Aorta (tissue), 5 donors: ENCODE measurements at regions of chr6 and their contacts with region 1.

Region 1: DNA sequence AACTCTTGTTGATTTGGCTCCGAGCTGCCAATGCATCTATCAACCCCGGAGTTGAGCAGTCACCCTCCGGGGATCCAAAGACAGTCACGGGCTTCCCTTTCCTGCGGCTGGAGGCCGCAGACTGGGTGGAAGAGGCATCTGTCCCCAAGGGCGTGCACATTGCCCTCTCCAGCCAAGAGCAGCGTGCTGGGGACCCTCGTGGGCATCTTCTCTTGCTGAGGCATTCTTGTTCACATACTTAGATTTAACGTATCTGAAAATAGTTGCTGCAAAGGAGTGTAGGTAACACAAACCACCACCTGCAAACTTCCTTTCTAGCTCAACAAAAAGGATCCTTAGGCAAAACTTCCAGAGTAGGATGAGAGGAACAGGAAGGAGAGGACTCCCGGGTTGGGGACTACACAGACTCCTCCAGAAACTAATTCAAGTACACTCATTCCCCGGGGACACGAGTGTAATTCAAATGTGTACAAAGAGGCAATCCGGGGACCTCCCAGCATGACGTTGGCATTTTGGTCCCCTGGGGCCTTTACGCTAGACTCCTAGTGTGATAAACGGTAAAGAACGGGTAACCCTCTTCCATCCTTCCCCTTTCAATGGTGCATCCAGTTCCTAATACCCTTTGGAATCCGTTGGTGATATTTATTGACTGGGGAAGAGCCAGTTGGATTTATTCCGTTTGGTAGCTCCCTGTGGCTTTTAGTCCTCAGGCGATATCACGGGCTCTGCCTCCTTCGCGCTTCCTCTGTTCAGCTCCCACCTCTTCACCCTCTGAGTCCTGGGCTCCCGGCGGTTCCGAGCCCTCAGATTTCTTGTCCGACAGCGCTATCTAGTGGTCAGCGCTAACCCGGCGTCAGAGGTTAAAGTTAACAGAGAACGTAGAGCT is 2.7 kb upstream of the COL12A1 start:
- DNase-seq: peak; percentile 89 to 96
- ATAC-seq: peak; percentile 81
- H3K4me3 ChIP-seq: no peak overlapping the region
- H3K27ac ChIP-seq: no peak overlapping the region
- H3K4me1 ChIP-seq: no peaks in the 10 kb centered on the region
- H3K27me3 ChIP-seq: no peaks in the 10 kb centered on the region

Region 2: GRCh38 chr6:73675466-73676098 is 1533.0 kb before region 1 on chr6:
- intact Hi-C with region 1: loop called in 1 of 2 experiments (anchors 10 kb)
- DNase-seq: peak; percentile 74 to 84
- ATAC-seq: peak; percentile 84
- H3K4me3 ChIP-seq: no peak overlapping the region
- H3K27ac ChIP-seq: no peak overlapping the region
- H3K4me1 ChIP-seq: peaks cover 0 to 3% of the 10 kb centered on the region in 2 donors
- H3K27me3 ChIP-seq: no peaks in the 10 kb centered on the region

Region 3: DNA sequence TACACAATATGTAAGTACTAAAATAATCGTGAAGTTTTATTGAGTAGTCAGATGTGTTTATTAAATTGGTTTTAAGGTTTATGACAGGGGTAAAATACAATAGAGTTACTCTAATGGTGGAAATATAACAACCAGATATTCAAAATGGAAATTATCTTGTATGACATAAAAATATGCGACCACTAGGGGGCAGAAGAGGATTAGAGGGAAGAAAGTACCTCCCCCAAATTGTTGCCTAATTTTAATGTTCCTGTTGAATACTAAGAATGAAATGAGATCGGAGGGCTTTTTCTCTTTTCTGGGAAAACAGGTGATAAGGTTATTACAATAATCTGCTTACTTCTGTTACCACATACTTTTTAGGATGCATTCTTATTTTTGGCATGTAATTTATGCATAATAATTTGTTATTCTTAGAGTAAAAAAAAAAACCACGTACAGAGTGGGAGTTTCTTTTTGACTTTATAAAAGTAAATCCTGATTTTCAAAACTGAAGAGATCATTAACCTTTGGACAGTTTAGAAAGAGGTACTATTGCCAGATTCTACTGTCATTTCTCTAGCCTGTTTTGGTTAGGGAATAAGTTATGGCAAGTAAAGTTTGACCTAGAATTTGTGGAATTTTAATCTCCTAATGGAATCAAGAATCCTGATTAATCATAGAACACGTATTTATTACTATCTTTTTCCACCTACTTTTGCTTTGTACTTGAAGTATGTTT is 1353.4 kb before region 1 on chr6:
- intact Hi-C with region 1: loop called (anchors 2 to 5 kb)
- DNase-seq: no peak
- ATAC-seq: peak; percentile 85
- H3K4me3 ChIP-seq: no peak overlapping the region
- H3K27ac ChIP-seq: no peak overlapping the region
- H3K4me1 ChIP-seq: no peaks in the 10 kb centered on the region
- H3K27me3 ChIP-seq: no peaks in the 10 kb centered on the region

Region 4: GRCh38 chr6:74091136-74091793 is 1117.3 kb before region 1 on chr6:
- intact Hi-C with region 1: loop called (anchors 2 to 5 kb)
- DNase-seq: no peak
- ATAC-seq: peak; percentile 56
- H3K4me3 ChIP-seq: no peak overlapping the region
- H3K27ac ChIP-seq: no peak overlapping the region
- H3K4me1 ChIP-seq: no peaks in the 10 kb centered on the region
- H3K27me3 ChIP-seq: no peaks in the 10 kb centered on the region

Region 5: GRCh38 chr6:74606581-74607071 is 601.9 kb before region 1 on chr6:
- intact Hi-C with region 1: loop called (anchors 10 kb)
- DNase-seq: no peak
- ATAC-seq: peak; percentile 89
- H3K4me3 ChIP-seq: no peak overlapping the region
- H3K27ac ChIP-seq: no peak overlapping the region
- H3K4me1 ChIP-seq: peaks cover 2 to 6% of the 10 kb centered on the region in 2 donors
- H3K27me3 ChIP-seq: peaks cover 0 to 2% of the 10 kb centered on the region in 2 donors

Region 6: DNA sequence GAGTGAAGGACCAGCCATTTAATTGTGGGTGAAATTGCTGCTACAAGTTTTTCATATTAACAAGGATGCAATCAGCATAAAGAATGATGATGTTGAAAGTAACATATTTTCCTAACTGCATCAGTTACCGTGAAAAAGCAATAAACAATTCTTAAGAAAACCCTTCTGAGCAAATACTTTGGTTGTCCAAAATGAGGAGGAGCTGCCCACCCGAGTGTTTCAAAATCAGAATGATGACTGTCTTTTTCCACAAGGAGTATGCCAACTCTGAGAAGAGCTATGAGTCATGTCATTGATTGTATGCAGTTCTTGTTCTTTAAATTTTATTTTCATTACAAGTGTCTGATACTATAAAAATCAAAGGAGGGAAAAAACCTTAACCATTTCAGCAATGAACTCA is 473.2 kb before region 1 on chr6:
- intact Hi-C with region 1: loop called in 1 of 2 experiments (anchors 10 kb)
- DNase-seq: no peak
- ATAC-seq: peak; percentile 81
- H3K4me3 ChIP-seq: no peak overlapping the region
- H3K27ac ChIP-seq: no peak overlapping the region
- H3K4me1 ChIP-seq: no peaks in the 10 kb centered on the region
- H3K27me3 ChIP-seq: no peaks in the 10 kb centered on the region

Region 7: DNA sequence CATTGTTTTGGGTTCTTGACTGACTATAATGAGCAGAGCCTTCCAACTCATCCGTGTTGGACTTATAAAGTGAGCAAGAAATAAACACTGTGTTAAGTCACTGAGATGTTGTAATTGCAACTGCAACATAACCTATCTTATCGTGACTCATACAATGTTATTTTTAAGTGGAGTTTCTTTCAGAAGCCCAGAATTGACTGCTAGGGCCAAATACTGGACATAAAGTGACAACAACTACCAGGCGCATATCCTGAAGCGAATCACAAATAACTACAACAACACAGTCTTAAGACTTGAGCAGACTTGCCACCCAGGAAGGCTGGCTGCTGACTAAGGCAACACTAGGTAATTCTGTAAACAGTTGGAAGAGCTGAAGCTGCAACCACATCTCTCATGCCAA is 329.3 kb before region 1 on chr6:
- intact Hi-C with region 1: no loop called
- DNase-seq: no peak
- ATAC-seq: peak; percentile 62
- H3K4me3 ChIP-seq: no peak overlapping the region
- H3K27ac ChIP-seq: no peak overlapping the region
- H3K4me1 ChIP-seq: no peaks in the 10 kb centered on the region
- H3K27me3 ChIP-seq: no peaks in the 10 kb centered on the region

Region 8: DNA sequence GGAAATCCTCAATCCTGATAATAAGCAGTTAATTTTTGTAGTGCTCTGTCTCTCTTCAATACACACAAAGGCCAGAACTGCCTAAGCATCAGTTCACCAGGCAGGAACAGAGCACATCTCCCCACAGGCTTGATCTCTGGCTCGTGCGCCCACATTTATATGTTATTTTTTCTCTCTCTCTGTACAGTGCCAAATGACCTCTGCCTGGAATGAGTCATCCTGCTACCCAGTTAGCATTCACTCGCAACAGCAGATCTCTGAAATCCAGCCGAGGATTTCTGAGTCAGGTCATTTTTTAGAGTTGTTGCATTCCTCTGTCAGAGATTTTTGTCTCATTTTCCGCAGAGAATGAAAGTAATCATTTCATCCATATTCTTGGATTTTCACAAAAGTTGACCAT is 109.8 kb before region 1 on chr6:
- intact Hi-C with region 1: loop called in 1 of 2 experiments (anchors 5 kb)
- DNase-seq: peak in 1 of 2 donors; percentile 68
- ATAC-seq: peak; percentile 92
- H3K4me3 ChIP-seq: no peak overlapping the region
- H3K27ac ChIP-seq: peak overlapping the region in 1 of 2 donors; percentile 25
- H3K4me1 ChIP-seq: peaks cover 2 to 4% of the 10 kb centered on the region in 2 donors
- H3K27me3 ChIP-seq: no peaks in the 10 kb centered on the region